CD8-positive, alpha-beta T cell (primary cell): ENCODE measurements at regions of chr9 and their contacts with region 1.

Region 1: DNA sequence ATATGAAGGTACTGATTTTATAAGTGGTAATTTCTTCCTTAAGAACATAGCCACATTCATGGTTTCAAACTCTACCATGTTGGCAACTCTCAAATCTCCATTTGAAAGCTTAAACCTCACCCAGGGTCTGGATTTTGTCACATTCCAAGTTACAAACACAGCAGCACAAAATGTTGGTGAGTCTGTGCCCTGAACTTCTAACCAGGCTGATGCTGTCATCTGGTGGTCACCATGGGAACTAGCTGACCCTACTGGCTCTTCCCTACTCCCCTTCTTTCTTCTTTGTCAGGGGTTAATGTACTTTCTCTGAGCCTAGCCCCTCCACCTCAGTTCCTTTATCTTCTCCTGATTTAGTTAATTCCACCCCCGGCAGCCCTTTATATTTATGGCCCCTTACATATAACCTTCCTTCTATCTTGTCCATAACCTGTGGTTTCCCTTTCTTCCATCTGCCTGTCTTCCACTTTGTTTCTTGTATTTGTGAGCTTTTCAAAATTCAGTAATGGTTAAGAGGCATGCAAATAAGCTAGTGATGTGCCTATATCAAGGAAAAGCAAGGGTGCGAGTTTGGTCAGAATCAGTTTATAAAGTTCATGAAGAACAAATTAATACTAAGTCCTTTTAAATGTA is 35.9 kb downstream of the TGFBR1 start:
- DNase-seq: peak in 8 of 9 experiments; percentile 23 to 80 (median 56)
- ATAC-seq: peak; percentile 91
- H3K4me3 ChIP-seq: no peak overlapping the region
- H3K4me3 Mint-ChIP-seq: no peak overlapping the region
- H3K27ac ChIP-seq: peak overlapping the region in 1 of 2 experiments; percentile 7
- H3K27ac Mint-ChIP-seq: peak overlapping the region; percentile 52
- H3K4me1 ChIP-seq: peaks cover 29% of the 10 kb centered on the region
- H3K4me1 Mint-ChIP-seq: peaks cover 52% of the 10 kb centered on the region
- H3K27me3 ChIP-seq: no peaks in the 10 kb centered on the region
- H3K27me3 Mint-ChIP-seq: no peaks in the 10 kb centered on the region
- CTCF ChIP-seq: peak; percentile 89

Region 2: GRCh38 chr9:98989036-98990000 is 151.5 kb before region 1 on chr9:
- CTCF ChIA-PET with region 1: interaction called, 374 read pairs
- POLR2A ChIA-PET with region 1: no interaction called
- intact Hi-C with region 1: no loop called
- DNase-seq: no peak
- ATAC-seq: no peak
- H3K4me3 ChIP-seq: no peak overlapping the region
- H3K4me3 Mint-ChIP-seq: no peak overlapping the region
- H3K27ac ChIP-seq: no peak overlapping the region
- H3K27ac Mint-ChIP-seq: no peak overlapping the region
- H3K4me1 ChIP-seq: no peaks in the 10 kb centered on the region
- H3K4me1 Mint-ChIP-seq: no peaks in the 10 kb centered on the region
- H3K27me3 ChIP-seq: no peaks in the 10 kb centered on the region
- H3K27me3 Mint-ChIP-seq: no peaks in the 10 kb centered on the region
- CTCF ChIP-seq: no peak

Region 3: DNA sequence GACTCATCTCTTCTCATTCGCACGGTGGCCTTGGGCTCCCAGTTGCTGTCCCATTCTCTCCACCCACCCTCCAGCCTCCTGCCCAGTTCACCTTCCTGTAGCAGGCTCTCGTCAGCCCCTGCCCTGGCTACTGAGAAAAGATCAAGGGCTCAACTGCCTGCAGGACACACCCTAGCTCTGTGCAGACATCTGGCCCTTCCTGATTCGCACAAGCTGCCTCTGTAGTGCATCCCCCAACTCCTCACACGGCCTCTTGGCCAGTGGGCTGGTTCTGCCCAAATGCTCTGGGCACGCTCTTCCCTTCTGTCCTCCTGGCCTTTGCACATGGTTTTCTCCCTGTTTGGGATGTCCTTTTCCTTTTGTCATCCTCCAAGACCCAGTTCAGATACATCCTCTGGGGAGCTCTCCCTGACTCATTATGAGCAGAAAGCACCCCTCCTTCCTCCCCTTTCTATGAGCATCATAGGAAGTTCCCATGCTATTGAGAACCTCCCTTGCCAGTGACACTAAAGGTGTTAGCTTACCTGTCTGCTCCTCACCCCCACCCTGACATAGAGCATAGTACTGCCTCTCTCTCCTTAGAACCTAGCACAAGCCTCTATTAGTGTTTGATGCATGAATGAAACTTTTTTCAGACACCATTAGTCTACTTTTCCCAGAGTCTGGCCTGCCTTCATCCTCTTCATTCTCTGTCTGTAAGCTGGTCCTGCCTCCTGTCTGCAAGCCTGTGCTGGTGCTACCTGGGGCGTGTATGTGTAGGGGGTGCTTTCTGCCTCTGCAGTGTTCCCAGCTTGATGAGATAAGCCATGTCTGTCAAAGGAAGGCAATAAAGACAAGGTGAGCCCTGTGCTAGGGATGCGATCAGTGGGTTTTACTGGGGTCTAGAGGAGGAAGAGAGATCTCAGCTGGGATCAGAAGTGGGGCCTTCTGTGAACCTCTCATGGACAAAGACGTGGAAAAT is 114.2 kb before region 1 on chr9:
- CTCF ChIA-PET with region 1: interaction called, 10 read pairs
- POLR2A ChIA-PET with region 1: no interaction called
- intact Hi-C with region 1: no loop called
- DNase-seq: peak in 1 of 9 experiments; percentile 19
- ATAC-seq: peak; percentile 54
- H3K4me3 ChIP-seq: no peak overlapping the region
- H3K4me3 Mint-ChIP-seq: no peak overlapping the region
- H3K27ac ChIP-seq: no peak overlapping the region
- H3K27ac Mint-ChIP-seq: peak overlapping the region; percentile 24
- H3K4me1 ChIP-seq: peaks cover 17% of the 10 kb centered on the region
- H3K4me1 Mint-ChIP-seq: peaks cover 36% of the 10 kb centered on the region
- H3K27me3 ChIP-seq: no peaks in the 10 kb centered on the region
- H3K27me3 Mint-ChIP-seq: no peaks in the 10 kb centered on the region
- CTCF ChIP-seq: no peak

Region 4: DNA sequence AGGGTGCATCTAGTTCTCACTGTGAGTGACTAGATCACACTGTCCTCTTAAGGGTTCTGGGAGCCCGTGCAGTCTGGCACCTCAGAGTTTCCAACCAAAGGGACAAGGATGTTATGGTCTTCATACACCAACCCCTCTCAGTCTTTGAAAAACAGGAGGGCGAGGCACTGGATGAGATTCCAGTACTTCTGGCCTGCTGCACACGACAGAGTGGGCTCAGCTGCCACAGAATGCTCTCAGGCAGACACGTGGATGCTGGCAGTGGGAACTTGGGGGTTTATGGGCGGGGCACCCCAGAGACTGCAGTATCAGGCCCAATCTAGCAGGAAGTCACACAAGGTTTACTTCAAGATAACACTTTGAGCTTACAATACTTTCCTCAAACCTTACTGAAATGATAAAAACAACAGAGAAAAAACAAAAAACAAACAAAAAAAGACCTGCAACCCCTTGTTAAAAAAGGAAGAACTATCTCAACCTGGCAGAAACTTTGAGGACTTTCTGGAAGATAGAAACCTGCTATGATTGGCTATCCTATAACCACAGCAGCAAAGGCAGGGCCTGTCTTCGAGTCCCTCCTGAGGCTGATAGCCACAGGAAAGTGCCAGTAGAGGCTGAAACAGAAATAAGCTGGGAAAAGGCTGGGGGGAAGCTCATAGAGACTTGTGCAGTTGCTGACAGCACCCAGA is 64.2 kb before region 1 on chr9:
- CTCF ChIA-PET with region 1: interaction called, 14 read pairs
- POLR2A ChIA-PET with region 1: no interaction called
- intact Hi-C with region 1: no loop called
- DNase-seq: peak in 8 of 9 experiments; percentile 46 to 85 (median 64)
- ATAC-seq: peak; percentile 98
- H3K4me3 ChIP-seq: no peak overlapping the region
- H3K4me3 Mint-ChIP-seq: peak overlapping the region; percentile 33
- H3K27ac ChIP-seq: peak overlapping the region in 1 of 2 experiments; percentile 47
- H3K27ac Mint-ChIP-seq: peak overlapping the region; percentile 84
- H3K4me1 ChIP-seq: peaks cover 23% of the 10 kb centered on the region
- H3K4me1 Mint-ChIP-seq: peaks cover 54% of the 10 kb centered on the region
- H3K27me3 ChIP-seq: no peaks in the 10 kb centered on the region
- H3K27me3 Mint-ChIP-seq: no peaks in the 10 kb centered on the region
- CTCF ChIP-seq: no peak

Region 5: GRCh38 chr9:99118782-99119466 is 21.9 kb before region 1 on chr9:
- CTCF ChIA-PET with region 1: interaction called, 26 read pairs
- POLR2A ChIA-PET with region 1: interaction called, 7 read pairs
- intact Hi-C with region 1: no loop called
- DNase-seq: peak in 8 of 9 experiments; percentile 32 to 83 (median 62)
- ATAC-seq: peak; percentile 96
- H3K4me3 ChIP-seq: peak overlapping the region; percentile 15 to 36
- H3K4me3 Mint-ChIP-seq: peak overlapping the region; percentile 61
- H3K27ac ChIP-seq: peak overlapping the region; percentile 28 to 38
- H3K27ac Mint-ChIP-seq: peak overlapping the region; percentile 83
- H3K4me1 ChIP-seq: peaks cover 86% of the 10 kb centered on the region
- H3K4me1 Mint-ChIP-seq: peaks cover 91% of the 10 kb centered on the region
- H3K27me3 ChIP-seq: no peaks in the 10 kb centered on the region
- H3K27me3 Mint-ChIP-seq: no peaks in the 10 kb centered on the region
- CTCF ChIP-seq: no peak

Region 6: GRCh38 chr9:99221621-99222415 is 81.0 kb after region 1 on chr9 and contains the starts of genes ALG2 and SEC61B:
- CTCF ChIA-PET with region 1: no interaction called
- POLR2A ChIA-PET with region 1: no interaction called
- intact Hi-C with region 1: no loop called
- DNase-seq: peak; percentile 87 to 96 (median 94)
- ATAC-seq: peak; percentile 88
- H3K4me3 ChIP-seq: peak within 1 kb of the TSS; percentile 79 to 90
- H3K4me3 Mint-ChIP-seq: peak within 1 kb of the TSS; percentile 99
- H3K27ac ChIP-seq: peak within 1 kb of the TSS; percentile 95 to 99
- H3K27ac Mint-ChIP-seq: peak within 1 kb of the TSS; percentile 100
- H3K4me1 ChIP-seq: peaks cover 30% of the 10 kb centered on the region
- H3K4me1 Mint-ChIP-seq: peaks cover 80% of the 10 kb centered on the region
- H3K27me3 ChIP-seq: no peaks in the 10 kb centered on the region
- H3K27me3 Mint-ChIP-seq: no peaks in the 10 kb centered on the region
- CTCF ChIP-seq: no peak
- total RNA-seq, gene ALG2: 21.0 to 24.7 TPM
- total RNA-seq, gene SEC61B: 107 to 108 TPM